Mammary epithelial cell (primary cell): ENCODE measurements at regions of chr7 and their contacts with region 1.

Region 1: DNA sequence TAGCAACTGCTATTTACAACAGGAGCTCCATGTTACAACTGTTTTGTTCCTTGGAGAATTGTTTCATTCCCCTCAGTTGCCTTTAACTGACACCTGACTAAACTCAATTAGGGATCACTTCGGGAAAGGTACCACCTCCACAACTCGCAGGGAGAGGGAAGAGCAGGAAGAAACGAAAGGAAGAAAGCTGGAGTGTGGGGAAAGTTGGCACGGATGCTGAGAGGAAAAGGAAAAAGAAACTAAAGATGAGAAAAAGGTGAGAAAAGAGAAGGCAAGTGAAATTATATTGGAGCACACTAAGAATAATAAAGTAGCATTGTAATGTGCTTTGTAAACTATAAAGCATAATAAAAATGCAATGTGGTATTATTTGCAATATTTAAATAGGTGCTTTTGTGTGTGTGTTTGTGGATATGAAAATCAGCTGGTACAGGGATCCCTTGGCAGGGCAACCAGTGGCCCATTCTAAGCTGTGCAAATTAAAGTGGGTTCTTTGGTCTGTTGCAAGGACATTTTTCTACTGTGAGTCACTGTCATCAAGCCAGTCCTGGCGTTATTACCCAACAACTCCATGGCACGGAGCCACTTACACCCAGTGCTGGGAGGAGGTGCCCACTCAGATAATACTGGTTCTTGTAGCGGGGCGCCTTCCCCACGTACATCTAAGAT is 45.9 kb downstream of the HIPK2 start:
- DNase-seq: peak; percentile 87
- H3K4me3 ChIP-seq: peak overlapping the region in 2 of 3 experiments; percentile 15 to 28
- H3K27ac ChIP-seq: peak overlapping the region; percentile 55
- H3K4me1 ChIP-seq: peaks cover 67% of the 10 kb centered on the region
- H3K27me3 ChIP-seq: no peaks in the 10 kb centered on the region
- CTCF ChIP-seq: no peak

Region 2: DNA sequence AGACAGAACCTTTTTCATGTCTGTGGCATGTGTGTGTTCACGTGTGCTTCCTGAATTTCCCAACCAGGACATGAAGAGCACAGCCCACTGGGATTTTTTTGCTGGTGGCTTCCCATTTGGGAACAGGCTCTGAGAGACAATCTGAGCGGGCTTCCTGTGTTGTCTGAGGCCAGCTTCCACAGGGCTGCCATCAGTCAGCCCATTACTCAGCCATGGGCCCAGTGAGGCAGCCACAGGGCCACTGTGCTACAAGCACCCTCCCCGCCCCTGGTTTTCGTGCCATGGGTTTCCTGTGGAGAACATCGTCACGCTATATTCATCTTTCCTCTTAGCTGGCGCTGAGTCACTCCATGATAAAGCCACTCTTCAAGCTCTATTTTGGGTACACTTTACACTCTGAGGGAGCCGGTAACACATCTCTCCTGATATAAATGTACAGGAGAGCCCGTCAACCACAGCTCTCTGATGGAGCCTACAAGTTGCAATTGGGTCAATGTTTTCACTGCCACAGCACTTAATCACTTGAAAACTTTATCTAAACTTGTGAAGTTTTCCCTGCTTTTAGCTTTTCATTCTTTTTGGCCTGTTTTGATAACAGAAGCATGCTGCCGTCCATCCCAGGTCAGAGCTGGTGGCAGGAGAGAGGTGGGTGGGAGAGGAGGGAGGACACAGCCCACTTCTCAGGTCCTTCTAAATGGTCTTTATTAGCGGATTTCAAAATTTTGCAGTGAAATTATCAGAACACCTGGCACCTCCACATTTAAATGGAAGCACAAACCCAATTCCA is 51.1 kb before region 1 on chr7:
- CTCF ChIA-PET with region 1: no interaction called
- dilution Hi-C with region 1: no loop called
- in situ Hi-C with region 1: loop called in 1 of 2 experiments (anchors 5 kb)
- intact Hi-C with region 1: loop called (anchors 2 kb)
- DNase-seq: peak; percentile 97
- H3K4me3 ChIP-seq: no peak overlapping the region
- H3K27ac ChIP-seq: peak overlapping the region; percentile 97
- H3K4me1 ChIP-seq: peaks cover 49% of the 10 kb centered on the region
- H3K27me3 ChIP-seq: no peaks in the 10 kb centered on the region
- CTCF ChIP-seq: no peak

Region 3: GRCh38 chr7:139687980-139688632 is 43.8 kb before region 1 on chr7:
- CTCF ChIA-PET with region 1: no interaction called
- dilution Hi-C with region 1: no loop called
- in situ Hi-C with region 1: loop called in 1 of 2 experiments (anchors 5 kb)
- intact Hi-C with region 1: loop called (anchors 1 kb)
- DNase-seq: peak; percentile 66
- H3K4me3 ChIP-seq: no peak overlapping the region
- H3K27ac ChIP-seq: peak overlapping the region; percentile 51
- H3K4me1 ChIP-seq: peaks cover 31% of the 10 kb centered on the region
- H3K27me3 ChIP-seq: no peaks in the 10 kb centered on the region
- CTCF ChIP-seq: no peak